ENCODE measurements at regions of chr21 and their contacts with region 1.

Region 1: DNA sequence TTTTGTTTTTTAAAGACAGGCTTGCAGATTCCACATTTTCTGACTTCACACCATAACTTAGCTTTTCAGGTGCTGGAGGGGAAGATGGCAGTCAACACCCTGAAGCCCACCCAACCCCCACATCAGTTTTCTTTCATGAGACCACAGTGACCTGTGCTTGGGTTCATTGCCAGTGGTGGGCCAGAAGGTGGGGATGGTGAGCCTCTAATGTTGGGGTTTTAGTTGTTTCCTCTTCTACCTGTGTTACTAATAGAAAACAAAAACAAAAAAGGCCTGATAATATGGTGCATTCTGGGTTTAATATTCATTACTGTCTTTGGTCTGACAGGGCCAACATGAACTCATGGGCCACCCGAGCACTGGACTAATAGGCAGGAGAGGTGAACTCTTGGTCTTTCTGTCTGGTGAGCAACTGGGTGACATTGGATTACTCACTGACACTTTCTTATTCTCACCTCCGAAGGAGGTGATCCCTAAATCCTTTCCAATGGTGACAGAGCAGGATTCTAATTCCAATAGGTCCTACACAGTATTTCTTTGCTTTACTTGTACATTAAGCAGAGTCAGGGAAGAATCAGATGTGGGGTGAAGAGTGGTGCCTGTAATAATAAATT is 132.8 kb downstream of the CLIC6 start:
- DNase-seq: peak in 1 of 2 experiments; percentile 25
- H3K4me3 ChIP-seq: no peak overlapping the region
- H3K27ac ChIP-seq: no peak overlapping the region
- H3K4me1 ChIP-seq: peaks cover 0 to 2% (median under 1%) of the 10 kb centered on the region in 4 experiments; a peak in 3 of 7 replicates
- H3K27me3 ChIP-seq: no peaks in the 10 kb centered on the region
- CTCF ChIP-seq: peak; percentile 66 to 71 (median 67)
- EP300 ChIP-seq: no peak
- POLR2A ChIP-seq: no peak
- RAD21 ChIP-seq: peak; percentile 87 to 89

Region 2: GRCh38 chr21:34771512-34772028 is 30.1 kb before region 1 on chr21:
- CTCF ChIA-PET with region 1: no interaction called
- POLR2A ChIA-PET with region 1: no interaction called
- DNase-seq: peak in 1 of 2 experiments; percentile 3
- H3K4me3 ChIP-seq: no peak overlapping the region
- H3K27ac ChIP-seq: no peak overlapping the region
- H3K4me1 ChIP-seq: no peaks in the 10 kb centered on the region
- H3K27me3 ChIP-seq: no peaks in the 10 kb centered on the region
- CTCF ChIP-seq: no peak
- EP300 ChIP-seq: no peak
- POLR2A ChIP-seq: no peak
- RAD21 ChIP-seq: no peak

Region 3: GRCh38 chr21:34812504-34813265 is 11.1 kb after region 1 on chr21:
- CTCF ChIA-PET with region 1: interaction called, 36 read pairs
- POLR2A ChIA-PET with region 1: no interaction called
- DNase-seq: no peak
- H3K4me3 ChIP-seq: no peak overlapping the region
- H3K27ac ChIP-seq: no peak overlapping the region
- H3K4me1 ChIP-seq: peaks cover 0 to 3% (median 0%) of the 10 kb centered on the region in 4 experiments; a peak in 1 of 7 replicates
- H3K27me3 ChIP-seq: no peaks in the 10 kb centered on the region; a peak in 1 of 7 replicates
- CTCF ChIP-seq: no peak
- EP300 ChIP-seq: no peak
- POLR2A ChIP-seq: no peak
- RAD21 ChIP-seq: no peak

Region 4: DNA sequence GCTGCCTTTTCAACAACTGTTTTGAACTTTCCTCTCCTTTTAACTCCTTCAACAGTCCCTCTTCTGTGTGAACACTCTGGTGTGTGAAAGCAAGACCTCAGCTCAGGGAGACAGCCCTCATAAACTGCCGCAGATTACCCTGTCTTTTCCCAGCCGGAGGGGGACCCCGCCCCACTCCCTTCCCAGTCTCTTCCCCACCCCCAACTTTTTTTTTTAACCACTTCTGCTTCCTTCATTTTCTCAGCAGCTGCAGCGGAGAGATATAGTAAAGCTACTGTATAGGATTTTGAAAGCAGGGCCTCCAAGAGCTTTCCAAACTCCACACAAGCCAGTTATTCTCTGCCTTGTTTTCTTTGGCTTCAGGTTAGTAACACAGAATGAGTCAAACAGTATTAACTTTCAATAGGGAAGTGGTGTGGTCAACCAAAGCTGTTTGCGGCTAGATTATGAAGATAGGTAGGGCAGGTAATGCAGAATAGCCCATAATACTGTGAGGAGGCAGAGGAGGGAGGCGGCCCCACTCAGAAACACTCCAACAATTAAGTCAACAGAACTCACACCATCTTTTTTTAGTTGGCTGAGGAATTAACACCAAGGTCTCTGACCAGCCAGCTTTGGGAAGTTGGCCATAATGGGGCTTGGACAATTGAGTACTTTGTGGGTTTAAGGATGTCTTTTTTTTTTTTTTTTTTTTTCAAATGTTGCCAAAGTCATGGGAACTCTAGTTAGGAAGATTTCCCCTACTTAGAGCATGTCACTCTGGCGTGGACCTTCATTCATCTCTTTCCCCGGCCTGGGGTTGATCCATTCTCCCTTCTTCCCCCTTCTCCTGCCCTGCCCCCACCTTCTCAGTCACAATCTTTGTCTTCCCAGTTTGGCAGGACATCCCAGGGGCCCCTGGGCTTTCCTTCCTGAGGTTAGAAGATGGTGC is 44.2 kb after region 1 on chr21:
- CTCF ChIA-PET with region 1: no interaction called
- POLR2A ChIA-PET with region 1: no interaction called
- DNase-seq: no peak
- H3K4me3 ChIP-seq: no peak overlapping the region
- H3K27ac ChIP-seq: no peak overlapping the region
- H3K4me1 ChIP-seq: peaks cover 7 to 23% (median 15%) of the 10 kb centered on the region in 4 experiments
- H3K27me3 ChIP-seq: no peaks in the 10 kb centered on the region; a peak in 3 of 7 replicates
- CTCF ChIP-seq: no peak
- EP300 ChIP-seq: no peak
- POLR2A ChIP-seq: no peak
- RAD21 ChIP-seq: no peak

Region 5: DNA sequence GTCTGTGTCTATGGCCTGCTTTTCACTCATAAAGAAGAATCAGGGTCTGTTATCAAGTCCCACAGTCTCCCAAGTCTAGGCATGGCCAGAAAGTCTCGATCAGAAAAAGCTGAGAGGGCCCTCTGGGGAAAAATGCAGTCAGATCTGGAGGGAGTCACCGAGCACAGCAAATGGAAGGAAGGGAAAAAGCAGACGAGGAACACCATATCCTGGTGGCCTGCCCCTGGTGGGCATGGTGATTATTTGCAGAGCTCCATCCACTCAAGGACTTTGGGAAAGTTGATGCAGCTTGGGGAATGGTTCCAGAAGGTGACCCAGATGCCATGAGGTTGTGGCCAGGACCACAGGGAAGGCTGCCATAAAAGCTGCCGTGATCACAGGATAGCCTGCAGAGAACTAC is 56.2 kb after region 1 on chr21:
- CTCF ChIA-PET with region 1: interaction called, 11 read pairs
- POLR2A ChIA-PET with region 1: no interaction called
- DNase-seq: no peak
- H3K4me3 ChIP-seq: no peak overlapping the region
- H3K27ac ChIP-seq: no peak overlapping the region
- H3K4me1 ChIP-seq: no peaks in the 10 kb centered on the region
- H3K27me3 ChIP-seq: peaks cover 0 to 3% (median 0%) of the 10 kb centered on the region in 4 experiments; a peak in 1 of 7 replicates
- CTCF ChIP-seq: peak; percentile 38 to 63 (median 50); a peak in 3 of 4 replicates
- EP300 ChIP-seq: no peak
- POLR2A ChIP-seq: no peak
- RAD21 ChIP-seq: peak in 1 of 2 experiments; percentile 32; a peak in 2 of 4 replicates

Region 6: GRCh38 chr21:35011681-35012080 is 210.1 kb after region 1 on chr21:
- CTCF ChIA-PET with region 1: no interaction called
- POLR2A ChIA-PET with region 1: no interaction called
- DNase-seq: no peak
- H3K4me3 ChIP-seq: no peak overlapping the region
- H3K27ac ChIP-seq: no peak overlapping the region
- H3K4me1 ChIP-seq: no peaks in the 10 kb centered on the region
- H3K27me3 ChIP-seq: no peaks in the 10 kb centered on the region
- CTCF ChIP-seq: no peak
- EP300 ChIP-seq: no peak
- POLR2A ChIP-seq: no peak
- RAD21 ChIP-seq: no peak

Measured in H1 (cell line).